GM18951 (cell line): ENCODE measurements at regions of chrX and their contacts with region 1.

Region 1: DNA sequence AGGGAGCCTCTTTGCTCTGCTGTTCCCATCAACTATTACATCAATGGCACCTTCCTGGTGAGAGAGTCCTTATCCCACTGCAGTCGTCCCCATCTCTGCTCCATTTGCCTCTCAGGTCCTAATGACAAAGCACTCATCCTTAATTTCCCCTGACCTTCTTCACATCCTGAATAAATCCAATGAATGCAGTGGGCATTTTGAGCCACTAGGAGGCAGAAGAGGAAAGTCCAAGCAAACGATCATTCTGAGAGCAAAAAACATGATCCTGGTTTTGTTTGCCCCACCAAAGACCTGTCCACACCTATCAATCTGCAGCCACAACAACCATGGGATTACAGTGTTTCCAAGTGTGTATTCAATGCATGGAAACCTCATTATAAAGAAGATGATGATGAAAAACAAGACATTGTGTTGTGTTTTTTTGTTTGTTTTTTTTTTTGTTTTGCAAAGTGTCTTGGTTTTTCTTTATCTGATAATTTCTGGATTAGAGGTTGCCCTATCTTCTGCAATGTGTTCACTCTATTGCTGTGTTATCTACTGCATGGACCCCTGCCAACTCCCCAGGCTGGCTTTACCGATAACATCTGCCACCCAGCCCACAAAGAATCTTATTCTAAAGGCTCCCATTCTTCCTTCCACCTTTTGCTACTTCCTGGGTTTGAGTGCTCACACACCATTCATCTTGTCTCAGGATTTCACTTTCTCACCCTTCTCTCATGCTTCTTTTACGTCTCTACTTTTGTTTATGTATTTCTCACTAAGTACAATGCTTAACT is 207.2 kb downstream of the NLGN4X start:
- POLR2A ChIP-seq: no peak

Region 2: GRCh38 chrX:7083468-7084396 is 1062.2 kb after region 1 on chrX:
- in situ Hi-C with region 1: loop called (anchors 25 kb)
- POLR2A ChIP-seq: no peak